Natural killer cell (primary cell): ENCODE measurements at regions of chr18 and their contacts with region 1.

Region 1: DNA sequence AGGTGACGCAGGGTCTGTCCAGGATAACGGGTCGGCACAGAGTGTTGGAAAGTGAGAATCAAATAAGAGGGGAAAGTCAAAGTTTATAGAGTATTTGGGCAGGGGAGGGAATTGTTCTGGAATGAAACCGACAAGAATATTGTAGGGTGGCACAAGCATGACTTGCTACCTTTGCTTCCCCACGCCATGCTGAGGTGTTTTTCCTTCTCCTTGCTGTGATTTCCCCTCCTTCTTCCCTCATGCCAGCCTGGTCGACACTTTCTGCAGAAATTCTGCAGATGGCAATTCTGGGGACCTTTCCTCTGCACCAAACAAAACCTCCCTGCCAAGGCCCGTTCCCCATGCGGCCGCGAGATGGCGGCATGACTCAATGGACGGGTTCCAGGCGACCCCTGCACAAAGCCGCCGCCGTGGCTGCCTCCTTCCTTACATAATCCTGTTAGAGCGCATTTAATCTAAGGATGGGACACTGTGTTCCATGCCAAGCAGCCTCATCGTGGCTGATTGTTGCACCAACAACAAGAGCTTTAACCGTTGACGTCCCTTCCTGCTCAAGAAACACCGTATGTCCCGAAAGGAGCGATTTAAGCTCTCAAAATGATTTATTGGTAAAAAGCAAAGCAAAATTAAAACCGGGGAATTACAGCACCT is at the start of gene MRO:
- DNase-seq: peak; percentile 74 to 89
- ATAC-seq: peak; percentile 98 to 100 (median 100)
- H3K4me3 ChIP-seq: peak within 1 kb of the TSS; percentile 21
- H3K4me3 Mint-ChIP-seq: no peak within 1 kb of the TSS
- H3K27ac ChIP-seq: no peak within 1 kb of the TSS
- H3K27ac Mint-ChIP-seq: no peak within 1 kb of the TSS
- H3K4me1 ChIP-seq: peaks cover 11% of the 10 kb centered on the region
- H3K4me1 Mint-ChIP-seq: no peaks in the 10 kb centered on the region
- H3K27me3 ChIP-seq: peaks cover 5% of the 10 kb centered on the region
- H3K27me3 Mint-ChIP-seq: peaks cover 0 to 6% of the 10 kb centered on the region in 2 donors
- CTCF ChIP-seq: peak; percentile 94
- total RNA-seq, gene MRO: not detected

Region 2: GRCh38 chr18:50880119-50880465 is 60.2 kb after region 1 on chr18:
- intact Hi-C with region 1: no loop called
- DNase-seq: no peak
- ATAC-seq: peak in 1 of 3 donors; percentile 27
- H3K4me3 ChIP-seq: peak overlapping the region; percentile 96
- H3K4me3 Mint-ChIP-seq: peak overlapping the region; percentile 96
- H3K27ac ChIP-seq: peak overlapping the region; percentile 89
- H3K27ac Mint-ChIP-seq: peak overlapping the region; percentile 99 to 100
- H3K4me1 ChIP-seq: peaks cover 37% of the 10 kb centered on the region
- H3K4me1 Mint-ChIP-seq: peaks cover 26 to 32% of the 10 kb centered on the region in 2 donors
- H3K27me3 ChIP-seq: no peaks in the 10 kb centered on the region
- H3K27me3 Mint-ChIP-seq: no peaks in the 10 kb centered on the region
- CTCF ChIP-seq: no peak

Region 3: GRCh38 chr18:51051105-51051712 is 231.4 kb after region 1 on chr18:
- intact Hi-C with region 1: loop called (anchors 1 kb)
- DNase-seq: peak in 1 of 2 donors; percentile 79
- ATAC-seq: peak; percentile 74 to 85 (median 84)
- H3K4me3 ChIP-seq: no peak overlapping the region
- H3K4me3 Mint-ChIP-seq: no peak overlapping the region
- H3K27ac ChIP-seq: no peak overlapping the region
- H3K27ac Mint-ChIP-seq: peak overlapping the region; percentile 69 to 81
- H3K4me1 ChIP-seq: no peaks in the 10 kb centered on the region
- H3K4me1 Mint-ChIP-seq: peaks cover 23 to 35% of the 10 kb centered on the region in 2 donors
- H3K27me3 ChIP-seq: no peaks in the 10 kb centered on the region
- H3K27me3 Mint-ChIP-seq: no peaks in the 10 kb centered on the region
- CTCF ChIP-seq: peak; percentile 89

Region 4: DNA sequence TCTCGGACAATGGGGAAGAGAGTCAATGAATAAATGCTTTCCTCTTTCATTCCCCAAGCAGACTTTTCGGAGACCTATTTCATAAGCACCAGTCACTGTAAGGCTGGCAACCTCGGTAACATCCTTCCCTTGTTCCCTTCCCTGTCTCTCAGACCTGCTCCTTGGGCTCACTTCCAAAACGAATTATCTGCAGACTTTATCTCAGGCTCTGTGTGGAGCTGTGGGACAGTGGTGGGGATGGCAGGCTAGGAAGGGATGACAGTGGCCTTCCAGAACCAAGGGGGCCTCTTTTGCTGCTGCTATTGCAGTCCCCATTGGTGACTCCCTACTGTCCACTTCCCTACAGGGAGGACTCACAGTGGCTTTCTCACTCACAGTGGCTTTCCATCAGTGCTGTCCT is 563.3 kb after region 1 on chr18:
- intact Hi-C with region 1: loop called (anchors 10 kb)
- DNase-seq: no peak
- ATAC-seq: no peak
- H3K4me3 ChIP-seq: no peak overlapping the region
- H3K4me3 Mint-ChIP-seq: no peak overlapping the region
- H3K27ac ChIP-seq: no peak overlapping the region
- H3K27ac Mint-ChIP-seq: no peak overlapping the region
- H3K4me1 ChIP-seq: no peaks in the 10 kb centered on the region
- H3K4me1 Mint-ChIP-seq: peaks cover 0 to 7% of the 10 kb centered on the region in 2 donors
- H3K27me3 ChIP-seq: no peaks in the 10 kb centered on the region
- H3K27me3 Mint-ChIP-seq: peaks cover 0 to 7% of the 10 kb centered on the region in 2 donors
- CTCF ChIP-seq: no peak